ENCODE measurements at regions of chr22 and their contacts with region 1.

Region 1: GRCh38 chr22:49767355-49768062 is 60.2 kb downstream of the BRD1 start:
- DNase-seq: peak in 8 of 9 donors; percentile 11 to 58 (median 46)
- ATAC-seq: peak; percentile 67
- H3K4me3 ChIP-seq: no peak overlapping the region
- H3K4me3 Mint-ChIP-seq: no peak overlapping the region
- H3K27ac ChIP-seq: no peak overlapping the region
- H3K27ac Mint-ChIP-seq: peak overlapping the region in 8 of 9 donors; percentile 3 to 74 (median 32)
- H3K4me1 ChIP-seq: no peaks in the 10 kb centered on the region
- H3K4me1 Mint-ChIP-seq: peaks cover 0 to 18% (median 6%) of the 10 kb centered on the region in 7 donors
- H3K27me3 ChIP-seq: no peaks in the 10 kb centered on the region
- H3K27me3 Mint-ChIP-seq: no peaks in the 10 kb centered on the region

Region 2: GRCh38 chr22:49600891-49601431 is 166.5 kb before region 1 on chr22:
- CTCF ChIA-PET with region 1: no interaction called
- POLR2A ChIA-PET with region 1: no interaction called
- intact Hi-C with region 1: no loop called
- DNase-seq: peak in 1 of 9 donors; percentile 9
- ATAC-seq: no peak
- H3K4me3 ChIP-seq: no peak overlapping the region
- H3K4me3 Mint-ChIP-seq: peak overlapping the region in 1 of 10 donors; percentile 11
- H3K27ac ChIP-seq: no peak overlapping the region
- H3K27ac Mint-ChIP-seq: peak overlapping the region in 1 of 9 donors; percentile 82
- H3K4me1 ChIP-seq: peaks cover 0 to 5% of the 10 kb centered on the region in 2 donors
- H3K4me1 Mint-ChIP-seq: peaks cover 2 to 15% (median 9%) of the 10 kb centered on the region in 7 donors
- H3K27me3 ChIP-seq: no peaks in the 10 kb centered on the region
- H3K27me3 Mint-ChIP-seq: no peaks in the 10 kb centered on the region

Region 3: DNA sequence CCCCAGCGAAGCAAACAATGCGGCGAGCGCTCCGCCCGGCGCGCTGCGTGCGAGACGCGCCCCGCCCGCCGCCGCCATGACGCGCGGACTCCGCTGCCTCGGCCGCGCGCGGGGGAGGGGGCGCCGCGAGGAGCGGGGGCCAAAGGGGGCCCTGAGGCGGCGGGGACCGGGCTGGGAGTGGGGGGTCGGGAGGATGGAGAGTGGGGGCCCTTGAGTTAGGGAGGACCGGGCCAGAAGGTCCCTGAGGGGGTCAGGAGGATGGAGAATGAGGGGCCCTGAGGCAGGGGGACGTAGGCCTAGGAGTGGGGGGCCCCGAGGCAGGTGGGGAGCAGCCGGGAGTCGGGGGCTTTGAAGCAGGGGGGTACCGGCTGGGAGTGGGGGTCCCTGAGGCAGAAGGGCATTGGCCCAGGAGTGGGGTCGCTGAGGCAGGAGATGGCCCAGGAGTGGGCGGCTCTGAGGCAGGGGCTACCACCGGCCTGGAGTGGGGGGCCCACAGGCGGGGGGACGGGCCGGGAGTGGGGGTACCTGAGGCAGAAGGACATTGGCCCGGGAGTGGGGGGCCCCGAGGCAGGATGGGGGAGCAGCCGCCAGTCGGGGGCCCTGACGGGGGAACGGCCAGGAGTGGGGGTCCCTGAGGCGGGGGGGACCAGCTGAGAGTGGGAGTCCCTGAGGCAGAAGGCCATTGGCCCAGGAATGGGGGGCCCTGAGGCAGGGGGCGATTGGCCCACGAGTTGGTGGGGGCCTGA is 60.5 kb after region 1 on chr22 and contains the start of gene BRD1:
- CTCF ChIA-PET with region 1: no interaction called
- POLR2A ChIA-PET with region 1: interaction called, 3 read pairs
- intact Hi-C with region 1: loop called in 1 of 2 experiments (anchors 2 kb)
- DNase-seq: peak in 8 of 9 donors; percentile 35 to 71 (median 52)
- ATAC-seq: peak; percentile 76
- H3K4me3 ChIP-seq: peak within 1 kb of the TSS; percentile 75
- H3K4me3 Mint-ChIP-seq: peak within 1 kb of the TSS; percentile 90 to 93 (median 92)
- H3K27ac ChIP-seq: peak within 1 kb of the TSS; percentile 95
- H3K27ac Mint-ChIP-seq: peak within 1 kb of the TSS; percentile 87 to 96 (median 94)
- H3K4me1 ChIP-seq: peaks cover 28 to 36% of the 10 kb centered on the region in 2 donors
- H3K4me1 Mint-ChIP-seq: peaks cover 33 to 63% (median 50%) of the 10 kb centered on the region in 7 donors
- H3K27me3 ChIP-seq: no peaks in the 10 kb centered on the region
- H3K27me3 Mint-ChIP-seq: peaks cover 0 to 12% (median 0%) of the 10 kb centered on the region in 5 donors
- total RNA-seq, gene BRD1: 50.0 to 130 (median 87.7) TPM

Region 4: GRCh38 chr22:49884503-49885260 is 117.2 kb after region 1 on chr22:
- CTCF ChIA-PET with region 1: interaction called, 7 read pairs
- POLR2A ChIA-PET with region 1: no interaction called
- intact Hi-C with region 1: loop called in 1 of 2 experiments (anchors 1 kb)
- DNase-seq: no peak
- ATAC-seq: no peak
- H3K4me3 ChIP-seq: no peak overlapping the region
- H3K4me3 Mint-ChIP-seq: no peak overlapping the region
- H3K27ac ChIP-seq: no peak overlapping the region
- H3K27ac Mint-ChIP-seq: no peak overlapping the region
- H3K4me1 ChIP-seq: peaks cover 3 to 9% of the 10 kb centered on the region in 2 donors
- H3K4me1 Mint-ChIP-seq: peaks cover 19 to 35% (median 22%) of the 10 kb centered on the region in 7 donors
- H3K27me3 ChIP-seq: no peaks in the 10 kb centered on the region
- H3K27me3 Mint-ChIP-seq: no peaks in the 10 kb centered on the region

Region 5: DNA sequence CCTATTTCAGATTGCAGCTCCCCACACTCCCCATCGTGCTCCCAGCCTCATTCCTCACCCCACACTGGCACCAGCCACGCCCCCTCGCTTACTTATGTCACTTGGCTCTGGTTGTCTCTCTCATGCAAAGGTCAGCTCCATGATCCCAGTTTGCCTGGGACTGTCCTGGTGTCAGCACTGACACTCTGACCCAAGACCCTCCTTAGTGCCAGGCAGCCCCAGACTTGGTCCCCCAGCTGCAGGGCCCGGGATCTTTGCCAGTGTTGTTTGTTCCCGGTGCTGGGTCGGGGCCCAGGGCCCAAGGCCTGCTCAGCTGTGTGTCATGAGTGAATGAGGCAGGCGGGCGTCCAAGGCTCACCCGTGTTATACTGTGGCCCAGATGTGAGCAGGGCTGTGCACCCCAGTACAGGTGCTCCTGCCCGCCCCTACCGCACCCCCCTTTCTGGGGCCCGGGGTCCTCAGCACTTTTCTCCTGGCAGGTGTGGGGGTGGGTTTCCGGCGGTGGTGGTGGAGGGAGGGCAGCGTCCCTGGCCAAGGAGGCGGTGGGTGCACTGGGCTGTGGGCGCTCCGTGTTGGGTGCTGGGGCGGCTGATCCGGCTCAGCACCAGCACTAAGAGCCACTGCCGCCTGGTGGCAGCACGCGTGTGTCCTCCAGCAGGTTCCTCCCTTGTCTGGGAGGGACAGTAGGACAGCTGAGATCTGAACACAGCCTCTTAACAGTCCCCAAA is 225.6 kb after region 1 on chr22:
- CTCF ChIA-PET with region 1: no interaction called
- POLR2A ChIA-PET with region 1: no interaction called
- intact Hi-C with region 1: loop called in 1 of 2 experiments (anchors 1 kb)
- DNase-seq: peak in 7 of 9 donors; percentile 46 to 69 (median 53)
- ATAC-seq: peak; percentile 93
- H3K4me3 ChIP-seq: no peak overlapping the region
- H3K4me3 Mint-ChIP-seq: peak overlapping the region in 4 of 10 donors; percentile 32 to 49 (median 37)
- H3K27ac ChIP-seq: no peak overlapping the region
- H3K27ac Mint-ChIP-seq: peak overlapping the region in 3 of 9 donors; percentile 11 to 63 (median 50)
- H3K4me1 ChIP-seq: peaks cover 6 to 8% of the 10 kb centered on the region in 2 donors
- H3K4me1 Mint-ChIP-seq: peaks cover 3 to 12% (median 6%) of the 10 kb centered on the region in 7 donors
- H3K27me3 ChIP-seq: no peaks in the 10 kb centered on the region
- H3K27me3 Mint-ChIP-seq: peaks cover 0 to 14% (median 0%) of the 10 kb centered on the region in 5 donors

Region 6: DNA sequence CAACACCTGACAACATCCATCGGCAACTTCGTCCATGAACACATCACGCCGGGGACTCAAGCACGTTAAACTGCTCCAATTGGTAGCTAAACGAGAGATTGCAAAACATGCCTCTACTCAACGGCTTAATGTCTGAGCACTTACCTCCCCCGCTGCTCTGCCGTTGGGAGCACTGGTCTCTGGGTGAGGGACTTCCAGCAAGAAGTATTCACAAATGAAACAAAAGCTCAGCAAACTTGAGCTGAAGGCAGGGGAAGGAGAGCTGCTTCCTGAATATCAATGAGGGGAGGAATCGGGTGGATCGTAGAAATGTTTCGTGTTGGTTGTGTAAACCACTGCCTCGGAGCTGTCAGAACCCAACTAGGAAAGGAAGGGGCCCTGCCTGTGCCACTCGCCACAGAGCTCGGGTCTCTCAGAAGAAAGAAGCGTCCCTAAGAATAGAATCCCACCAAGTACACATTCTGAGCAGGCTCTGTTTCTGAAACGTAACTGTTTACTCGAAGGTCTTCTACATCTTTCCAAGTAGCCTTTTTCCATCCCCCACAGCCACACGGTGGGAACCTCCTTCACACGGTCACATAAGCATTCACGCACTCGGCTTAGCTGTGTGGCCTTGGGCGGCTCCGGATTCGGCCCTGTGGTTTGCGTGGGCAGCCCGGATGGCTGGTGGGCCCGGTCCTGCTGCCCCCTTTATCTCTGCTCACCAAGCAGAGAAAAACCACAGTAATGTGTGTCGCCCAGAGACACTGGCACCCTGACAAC is 317.9 kb after region 1 on chr22 and contains the start of gene MLC1:
- CTCF ChIA-PET with region 1: no interaction called
- POLR2A ChIA-PET with region 1: no interaction called
- intact Hi-C with region 1: no loop called
- DNase-seq: peak in 5 of 9 donors; percentile 8 to 21 (median 10)
- ATAC-seq: no peak
- H3K4me3 ChIP-seq: peak within 1 kb of the TSS; percentile 5
- H3K4me3 Mint-ChIP-seq: peak within 1 kb of the TSS in 1 of 10 donors; percentile 69
- H3K27ac ChIP-seq: no peak within 1 kb of the TSS
- H3K27ac Mint-ChIP-seq: peak within 1 kb of the TSS in 2 of 9 donors; percentile 0
- H3K4me1 ChIP-seq: peaks cover 0 to 3% of the 10 kb centered on the region in 2 donors
- H3K4me1 Mint-ChIP-seq: peaks cover 0 to 21% (median 3%) of the 10 kb centered on the region in 7 donors
- H3K27me3 ChIP-seq: no peaks in the 10 kb centered on the region
- H3K27me3 Mint-ChIP-seq: peaks cover 6 to 22% (median 15%) of the 10 kb centered on the region in 5 donors
- total RNA-seq, gene MLC1: 0.10 to 7.2 (median 2.3) TPM in 3 of 5 experiments, not detected in the others

Region 7: GRCh38 chr22:50148991-50149721 is 381.6 kb after region 1 on chr22:
- CTCF ChIA-PET with region 1: no interaction called
- POLR2A ChIA-PET with region 1: no interaction called
- intact Hi-C with region 1: loop called in 1 of 2 experiments (anchors 1 kb)
- DNase-seq: peak; percentile 61 to 80 (median 70)
- ATAC-seq: peak; percentile 96
- H3K4me3 ChIP-seq: no peak overlapping the region
- H3K4me3 Mint-ChIP-seq: no peak overlapping the region
- H3K27ac ChIP-seq: no peak overlapping the region
- H3K27ac Mint-ChIP-seq: no peak overlapping the region
- H3K4me1 ChIP-seq: no peaks in the 10 kb centered on the region
- H3K4me1 Mint-ChIP-seq: peaks cover 0 to 4% (median 0%) of the 10 kb centered on the region in 7 donors
- H3K27me3 ChIP-seq: no peaks in the 10 kb centered on the region
- H3K27me3 Mint-ChIP-seq: peaks cover 0 to 6% (median 0%) of the 10 kb centered on the region in 5 donors